ENCODE measurements at regions of chr13 and their contacts with region 1.

Region 1: DNA sequence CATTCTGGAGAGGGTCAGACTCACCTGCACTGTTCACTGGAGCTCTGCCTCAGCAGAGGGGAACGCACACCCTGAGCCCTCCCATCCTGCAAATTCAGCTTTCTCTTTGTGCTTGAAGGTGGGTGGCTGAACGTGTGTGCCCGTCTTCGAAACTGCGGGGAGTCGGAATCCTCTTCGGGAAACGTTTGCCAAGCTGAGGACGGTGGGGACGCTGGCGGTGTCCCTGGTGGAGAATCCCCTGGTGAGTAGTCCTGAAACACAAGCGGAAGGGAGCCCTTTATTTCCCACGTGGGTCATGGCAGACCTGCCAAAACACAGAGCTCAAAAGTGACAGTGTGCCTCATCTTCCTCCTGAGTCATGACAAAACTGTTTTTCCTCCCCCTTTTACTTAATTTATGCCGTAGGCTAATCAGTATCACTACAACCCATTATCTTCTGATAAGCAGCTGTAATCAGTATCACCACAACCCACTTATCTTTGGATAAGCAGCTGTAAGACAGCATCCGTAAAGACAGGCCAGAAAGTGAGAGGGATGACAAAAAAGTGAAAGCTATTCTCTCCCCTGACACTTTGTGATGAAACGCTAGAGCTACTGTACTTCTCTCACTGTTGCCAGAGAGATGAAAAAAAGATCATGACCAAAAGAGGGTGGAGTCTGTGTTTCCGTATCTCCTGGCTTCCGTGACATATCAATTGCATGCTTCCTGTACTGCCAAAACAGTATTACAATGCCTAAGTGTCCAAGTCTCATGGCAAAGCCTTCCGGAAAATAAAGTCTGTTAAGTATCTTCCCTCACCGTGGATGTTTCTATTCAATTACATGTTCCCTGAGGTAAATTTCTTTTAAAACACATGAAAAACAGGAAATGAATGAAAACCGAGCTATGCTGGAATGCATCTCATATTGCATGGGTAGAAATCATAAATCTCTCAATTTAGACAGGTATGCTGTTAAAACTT is 155.5 kb downstream of the TBC1D4 start:
- DNase-seq: peak; percentile 67
- H3K4me3 Mint-ChIP-seq: peak overlapping the region; percentile 78
- H3K27ac Mint-ChIP-seq: peak overlapping the region; percentile 97
- H3K4me1 Mint-ChIP-seq: peaks cover 45% of the 10 kb centered on the region
- H3K27me3 Mint-ChIP-seq: no peaks in the 10 kb centered on the region

Region 2: GRCh38 chr13:74847966-74848365 is 478.5 kb before region 1 on chr13:
- CTCF ChIA-PET with region 1: no interaction called
- DNase-seq: no peak
- H3K4me3 Mint-ChIP-seq: no peak overlapping the region
- H3K27ac Mint-ChIP-seq: no peak overlapping the region
- H3K4me1 Mint-ChIP-seq: no peaks in the 10 kb centered on the region
- H3K27me3 Mint-ChIP-seq: no peaks in the 10 kb centered on the region

Region 3: GRCh38 chr13:75271846-75272245 is 54.6 kb before region 1 on chr13:
- CTCF ChIA-PET with region 1: no interaction called
- DNase-seq: no peak
- H3K4me3 Mint-ChIP-seq: no peak overlapping the region
- H3K27ac Mint-ChIP-seq: no peak overlapping the region
- H3K4me1 Mint-ChIP-seq: no peaks in the 10 kb centered on the region
- H3K27me3 Mint-ChIP-seq: peaks cover 3% of the 10 kb centered on the region

Region 4: GRCh38 chr13:75357576-75358289 is 31.3 kb after region 1 on chr13:
- CTCF ChIA-PET with region 1: interaction called, 17 read pairs
- DNase-seq: peak; percentile 53
- H3K4me3 Mint-ChIP-seq: no peak overlapping the region
- H3K27ac Mint-ChIP-seq: no peak overlapping the region
- H3K4me1 Mint-ChIP-seq: peaks cover 3% of the 10 kb centered on the region
- H3K27me3 Mint-ChIP-seq: no peaks in the 10 kb centered on the region

Measured in activated naive CD4-positive, alpha-beta T cell treated with anti-CD3 and anti-CD28 coated beads, Interleukin-2, amount 10 ng/mL, durations not matched to agents 7 days and 5 days (primary cell).